ENCODE measurements at regions of chr3 and their contacts with region 1.

Region 1: GRCh38 chr3:184314700-184315542 is 515 bp downstream of the EIF4G1 start:
- DNase-seq: peak; percentile 32 to 81 (median 65)
- ATAC-seq: peak; percentile 64 to 68 (median 66)
- H3K4me3 ChIP-seq: peak overlapping the region; percentile 55 to 74
- H3K4me3 Mint-ChIP-seq: peak overlapping the region; percentile 78 to 85 (median 79)
- H3K27ac ChIP-seq: peak overlapping the region; percentile 94
- H3K27ac Mint-ChIP-seq: peak overlapping the region; percentile 88 to 95
- H3K4me1 ChIP-seq: peaks cover 2 to 37% of the 10 kb centered on the region in 2 experiments
- H3K4me1 Mint-ChIP-seq: peaks cover 31 to 36% (median 33%) of the 10 kb centered on the region in 3 donors
- H3K27me3 ChIP-seq: no peaks in the 10 kb centered on the region
- H3K27me3 Mint-ChIP-seq: no peaks in the 10 kb centered on the region

Region 2: DNA sequence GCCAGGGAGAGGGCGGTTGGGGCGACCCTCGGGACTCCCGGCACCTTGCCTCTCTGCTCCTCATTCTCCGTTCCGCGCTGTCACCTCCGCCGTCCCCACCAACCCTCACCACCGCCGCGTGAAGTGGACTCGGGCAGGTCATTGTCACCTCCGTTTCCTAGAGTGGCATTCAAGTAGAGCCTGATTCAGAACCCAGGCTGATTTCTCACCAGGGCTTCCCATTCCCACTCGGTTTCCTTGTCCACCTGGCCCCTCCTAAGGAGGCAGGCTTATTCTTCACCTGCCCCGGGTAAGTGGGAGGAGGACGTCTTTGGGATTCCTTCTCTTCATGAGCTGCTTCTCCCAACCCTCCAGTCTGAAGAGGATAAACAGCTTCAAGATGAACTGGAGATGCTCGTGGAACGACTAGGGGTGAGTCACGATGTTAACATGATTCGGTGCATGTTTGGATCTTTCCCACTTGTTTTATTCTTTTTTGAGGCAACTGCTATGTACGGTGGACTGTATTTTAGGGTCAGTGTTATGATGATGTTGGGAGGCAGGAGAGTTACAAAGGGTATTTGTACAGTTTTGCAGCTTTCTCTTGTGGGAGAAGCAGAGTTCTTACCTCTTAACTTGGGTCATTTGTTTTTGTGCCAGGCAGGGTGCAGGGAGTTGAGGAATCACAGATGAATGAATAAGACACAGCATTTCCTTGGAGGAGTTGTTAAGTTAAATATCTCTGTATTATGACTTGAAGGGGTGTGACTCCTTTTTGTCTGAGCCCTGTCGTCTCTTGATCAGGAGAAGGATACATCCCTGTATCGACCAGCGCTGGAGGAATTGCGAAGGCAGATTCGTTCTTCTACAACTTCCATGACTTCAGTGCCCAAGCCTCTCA is 15.2 kb before region 1 on chr3:
- CTCF ChIA-PET with region 1: interaction called in 1 of 2 experiments, 3 read pairs
- POLR2A ChIA-PET with region 1: interaction called in 1 of 2 experiments, 10 read pairs
- DNase-seq: no peak
- ATAC-seq: no peak
- H3K4me3 ChIP-seq: peak overlapping the region; percentile 68 to 85
- H3K4me3 Mint-ChIP-seq: peak overlapping the region; percentile 87 to 93 (median 90)
- H3K27ac ChIP-seq: peak overlapping the region; percentile 30
- H3K27ac Mint-ChIP-seq: peak overlapping the region; percentile 78 to 80
- H3K4me1 ChIP-seq: peaks cover 13 to 20% of the 10 kb centered on the region in 2 experiments
- H3K4me1 Mint-ChIP-seq: peaks cover 29 to 32% (median 32%) of the 10 kb centered on the region in 3 donors
- H3K27me3 ChIP-seq: no peaks in the 10 kb centered on the region
- H3K27me3 Mint-ChIP-seq: no peaks in the 10 kb centered on the region

Measured in T-cell (primary cell).